Mucosa of descending colon (tissue), 3 donors: ENCODE measurements at regions of chr12 and their contacts with region 1.

Region 1: DNA sequence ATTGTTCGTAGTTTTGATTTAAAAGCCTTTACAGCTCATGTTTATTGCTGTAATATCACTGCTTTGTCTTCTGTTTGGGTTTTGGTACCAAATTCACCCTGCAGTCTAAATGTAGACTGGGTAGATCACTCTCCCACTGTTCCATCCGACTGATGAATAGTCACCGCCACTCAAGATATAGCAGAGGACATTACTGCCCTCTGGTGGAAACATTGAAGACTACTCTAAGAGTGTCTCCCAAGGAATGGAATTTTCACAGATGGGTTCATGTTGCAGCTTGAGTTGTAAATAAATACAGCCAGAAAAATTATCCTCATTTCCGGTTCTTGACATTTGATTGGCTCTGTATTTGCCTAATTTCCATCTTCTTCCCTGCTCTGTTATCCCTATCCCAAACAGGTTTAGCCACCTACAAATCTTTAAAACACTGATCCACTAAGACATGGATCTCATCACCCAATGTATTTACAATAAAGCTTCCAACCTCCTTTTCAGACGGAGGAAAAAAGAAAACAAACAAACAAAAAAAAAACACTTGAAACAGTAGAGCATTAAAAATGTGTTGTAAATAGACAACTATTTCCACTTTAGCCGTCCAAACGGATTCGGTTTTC is 198.3 kb upstream of the CPNE8 start:
- DNase-seq: peak in 1 of 3 donors; percentile 48
- ATAC-seq: peak; percentile 89
- H3K4me3 ChIP-seq: no peak overlapping the region
- H3K4me1 ChIP-seq: no peaks in the 10 kb centered on the region
- CTCF ChIP-seq: peak; percentile 35

Region 2: DNA sequence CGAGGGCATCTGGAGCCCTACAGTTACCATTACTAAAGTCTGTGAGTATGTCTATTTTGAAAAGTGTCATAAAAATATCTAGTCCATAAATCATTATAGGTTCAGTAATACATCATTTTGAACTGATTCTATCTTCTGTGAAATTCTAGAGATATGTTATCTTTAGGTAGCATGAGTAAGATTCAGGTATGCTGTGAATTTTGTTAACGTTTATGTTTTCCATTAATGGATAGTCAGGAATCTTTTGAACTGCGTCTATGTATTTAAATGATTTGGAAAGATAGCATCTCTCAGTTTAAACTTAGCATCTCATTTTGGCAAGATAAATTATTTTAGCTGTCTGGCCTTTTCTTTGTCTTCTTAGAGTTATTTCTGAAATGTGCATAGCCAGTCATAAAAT is 778.8 kb before region 1 on chr12:
- intact Hi-C with region 1: loop called (anchors 10 kb)
- DNase-seq: no peak
- ATAC-seq: no peak
- H3K4me3 ChIP-seq: no peak overlapping the region
- H3K4me1 ChIP-seq: no peaks in the 10 kb centered on the region
- CTCF ChIP-seq: no peak

Region 3: GRCh38 chr12:38332814-38333213 is 770.8 kb before region 1 on chr12:
- intact Hi-C with region 1: loop called (anchors 10 kb)
- DNase-seq: no peak
- ATAC-seq: no peak
- H3K4me3 ChIP-seq: no peak overlapping the region
- H3K4me1 ChIP-seq: no peaks in the 10 kb centered on the region
- CTCF ChIP-seq: no peak

Region 4: GRCh38 chr12:38921025-38921677 is 182.5 kb before region 1 on chr12:
- intact Hi-C with region 1: loop called in 1 of 2 experiments (anchors 2 kb)
- DNase-seq: peak in 2 of 3 donors; percentile 35 to 87
- ATAC-seq: peak; percentile 84
- H3K4me3 ChIP-seq: no peak overlapping the region
- H3K4me1 ChIP-seq: no peaks in the 10 kb centered on the region
- CTCF ChIP-seq: no peak

Region 5: DNA sequence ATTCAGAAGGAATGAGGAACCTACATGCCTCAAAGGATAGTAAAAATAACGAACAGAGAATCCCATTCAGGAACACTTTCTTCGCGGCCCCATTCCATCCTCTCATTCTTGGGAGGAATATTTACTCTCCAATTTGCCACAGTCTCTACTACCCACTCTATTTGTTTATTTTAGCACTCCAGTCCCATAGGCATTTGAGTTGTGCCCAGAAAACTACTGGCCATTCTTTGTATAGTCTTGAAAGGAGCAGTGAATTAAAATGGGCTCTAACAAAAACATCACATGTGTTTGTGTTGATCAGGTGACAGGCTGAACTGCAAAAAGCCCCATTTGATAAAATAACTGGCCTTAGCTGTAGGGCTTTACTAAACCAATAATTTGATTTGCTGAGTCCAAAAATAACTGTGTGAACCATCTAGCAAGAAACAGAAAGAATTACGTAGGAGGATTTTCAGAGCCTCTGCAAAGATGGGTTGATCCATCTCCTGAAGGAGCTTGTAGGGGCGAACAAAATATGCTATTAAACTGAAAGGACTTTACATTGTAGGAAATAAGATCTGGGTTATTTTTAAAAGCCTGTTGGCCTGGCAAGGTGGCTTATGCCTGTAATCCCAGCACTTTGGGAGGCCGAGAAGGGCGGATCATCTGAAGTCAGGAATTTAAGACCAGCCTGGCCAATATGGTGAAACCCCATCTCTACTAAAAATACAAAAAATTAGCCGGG is 56.0 kb before region 1 on chr12:
- intact Hi-C with region 1: no loop called
- DNase-seq: no peak
- ATAC-seq: no peak
- H3K4me3 ChIP-seq: no peak overlapping the region
- H3K4me1 ChIP-seq: no peaks in the 10 kb centered on the region
- CTCF ChIP-seq: no peak